Endothelial cell of umbilical vein (primary cell): ENCODE measurements at regions of chr5 and their contacts with region 1.

Region 1: GRCh38 chr5:34486160-34486848 is 169.8 kb upstream of the RAI14 start:
- DNase-seq: peak; percentile 87
- H3K4me3 ChIP-seq: no peak overlapping the region
- H3K27ac ChIP-seq: peak overlapping the region; percentile 78
- H3K4me1 ChIP-seq: peaks cover 19% of the 10 kb centered on the region
- H3K27me3 ChIP-seq: peaks cover 0 to 7% of the 10 kb centered on the region in 2 experiments
- CTCF ChIP-seq: peak; percentile 68 to 78
- POLR2A ChIP-seq: no peak

Region 2: DNA sequence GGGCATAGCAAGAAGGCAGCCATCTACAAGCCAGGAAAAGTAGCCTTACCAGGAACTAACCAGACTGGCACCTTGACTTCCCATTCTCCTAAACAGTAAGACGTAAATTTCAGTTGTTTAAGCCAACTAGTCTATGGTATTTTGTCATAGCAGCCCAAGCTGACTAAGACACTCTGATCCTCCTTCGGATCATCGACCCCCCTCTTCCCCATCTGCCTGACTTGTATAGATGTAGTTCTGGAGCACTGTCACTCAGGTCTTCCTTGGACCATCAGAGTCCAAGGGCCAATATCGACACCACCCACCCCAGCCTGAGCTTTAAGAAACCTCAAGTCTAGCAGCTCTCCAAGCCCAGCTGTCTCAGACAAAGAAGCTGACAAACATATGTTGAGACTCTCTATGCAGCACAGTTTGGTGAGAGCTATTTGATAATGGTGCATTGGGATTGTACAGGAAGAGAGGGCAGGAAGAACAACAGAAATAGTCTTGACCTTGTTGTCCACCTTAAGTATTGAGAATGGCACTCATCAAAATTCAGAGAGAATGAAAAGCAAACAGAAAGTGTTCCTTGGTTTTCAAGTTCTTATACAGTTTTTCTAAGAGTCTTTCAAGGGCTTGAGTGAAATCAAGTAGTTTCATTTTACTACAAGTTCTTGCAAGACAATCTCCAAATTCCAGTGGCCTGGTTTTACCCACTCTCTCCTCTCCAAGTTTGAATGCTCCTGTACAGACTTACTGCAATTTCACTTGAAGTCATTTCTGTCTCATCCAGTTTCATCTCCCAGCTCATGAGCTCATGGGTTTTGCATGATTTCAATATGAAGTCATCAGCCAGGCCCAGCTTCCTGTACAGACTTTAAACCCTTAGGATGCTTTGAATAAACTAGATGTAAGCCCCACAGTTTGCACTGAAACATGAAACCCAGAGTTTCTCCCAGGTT is 47.5 kb after region 1 on chr5:
- CTCF ChIA-PET with region 1: interaction called, 20 read pairs
- POLR2A ChIA-PET with region 1: no interaction called
- dilution Hi-C with region 1: no loop called
- intact Hi-C with region 1: loop called (anchors 1 kb)
- DNase-seq: peak; percentile 39
- H3K4me3 ChIP-seq: no peak overlapping the region
- H3K27ac ChIP-seq: no peak overlapping the region
- H3K4me1 ChIP-seq: peaks cover 11% of the 10 kb centered on the region
- H3K27me3 ChIP-seq: no peaks in the 10 kb centered on the region
- CTCF ChIP-seq: no peak
- POLR2A ChIP-seq: no peak

Region 3: GRCh38 chr5:34551911-34552433 is 65.7 kb after region 1 on chr5:
- CTCF ChIA-PET with region 1: no interaction called
- POLR2A ChIA-PET with region 1: no interaction called
- dilution Hi-C with region 1: no loop called
- intact Hi-C with region 1: no loop called
- DNase-seq: no peak
- H3K4me3 ChIP-seq: no peak overlapping the region
- H3K27ac ChIP-seq: no peak overlapping the region
- H3K4me1 ChIP-seq: no peaks in the 10 kb centered on the region
- H3K27me3 ChIP-seq: no peaks in the 10 kb centered on the region
- CTCF ChIP-seq: no peak
- POLR2A ChIP-seq: no peak

Region 4: DNA sequence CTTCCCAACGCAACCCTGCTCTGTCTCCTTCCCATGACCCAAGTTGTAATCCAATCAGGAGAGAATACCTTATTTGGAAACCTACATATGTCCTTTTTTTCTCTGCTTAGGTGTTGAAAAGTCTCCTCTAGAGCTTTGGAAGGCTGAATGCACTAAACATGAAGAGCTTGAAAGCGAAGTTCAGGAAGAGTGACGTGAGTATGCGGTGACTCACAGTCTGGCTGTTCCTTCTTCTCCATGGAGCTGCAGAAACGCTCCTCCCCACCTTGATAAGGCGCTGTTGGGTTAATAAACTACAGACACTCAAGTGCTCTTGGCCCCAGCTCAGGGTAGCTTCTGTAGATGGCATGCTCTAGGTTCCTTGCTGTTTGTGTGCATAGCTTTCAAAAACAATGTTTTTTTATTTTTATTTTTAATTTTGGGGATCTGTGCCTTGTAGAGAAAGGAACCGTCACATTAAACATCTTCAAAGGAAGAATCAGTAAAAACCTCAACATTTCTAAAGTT is 200.5 kb after region 1 on chr5:
- CTCF ChIA-PET with region 1: interaction called, 25 read pairs
- POLR2A ChIA-PET with region 1: no interaction called
- dilution Hi-C with region 1: no loop called
- intact Hi-C with region 1: loop called (anchors 1 kb)
- DNase-seq: peak; percentile 97
- H3K4me3 ChIP-seq: peak overlapping the region in 1 of 3 experiments; percentile 12
- H3K27ac ChIP-seq: peak overlapping the region; percentile 80
- H3K4me1 ChIP-seq: peaks cover 63% of the 10 kb centered on the region
- H3K27me3 ChIP-seq: no peaks in the 10 kb centered on the region
- CTCF ChIP-seq: peak in 1 of 2 donors; percentile 6
- POLR2A ChIP-seq: no peak

Region 5: DNA sequence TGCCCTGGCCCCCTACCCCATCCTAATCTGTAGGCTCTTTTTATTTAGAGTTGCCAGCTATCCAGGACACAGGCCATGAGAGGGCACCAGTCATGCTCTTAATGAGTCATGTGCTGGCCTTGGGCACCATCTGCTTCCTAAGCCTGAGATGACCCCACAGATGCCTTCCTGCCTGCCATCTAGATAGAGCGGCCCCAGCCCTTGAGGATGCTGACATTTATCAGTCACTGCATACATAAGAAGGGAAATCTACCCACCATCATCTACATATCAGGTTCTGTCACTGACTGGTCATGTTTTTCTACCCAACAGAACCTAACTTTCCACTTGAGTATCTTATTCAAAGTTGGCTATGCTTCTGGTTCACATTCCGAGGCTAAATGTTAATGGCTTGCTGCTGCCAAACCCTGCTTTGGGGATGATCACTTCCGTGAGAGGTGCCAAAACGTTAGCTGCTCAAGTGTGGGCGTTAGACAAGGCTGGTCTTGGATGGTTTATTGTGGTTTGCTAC is 302.8 kb after region 1 on chr5:
- CTCF ChIA-PET with region 1: interaction called, 4 read pairs
- POLR2A ChIA-PET with region 1: no interaction called
- dilution Hi-C with region 1: no loop called
- intact Hi-C with region 1: loop called (anchors 5 kb)
- DNase-seq: peak; percentile 95
- H3K4me3 ChIP-seq: no peak overlapping the region
- H3K27ac ChIP-seq: peak overlapping the region; percentile 81
- H3K4me1 ChIP-seq: peaks cover 46% of the 10 kb centered on the region
- H3K27me3 ChIP-seq: no peaks in the 10 kb centered on the region
- CTCF ChIP-seq: no peak
- POLR2A ChIP-seq: peak; percentile 84

Region 6: DNA sequence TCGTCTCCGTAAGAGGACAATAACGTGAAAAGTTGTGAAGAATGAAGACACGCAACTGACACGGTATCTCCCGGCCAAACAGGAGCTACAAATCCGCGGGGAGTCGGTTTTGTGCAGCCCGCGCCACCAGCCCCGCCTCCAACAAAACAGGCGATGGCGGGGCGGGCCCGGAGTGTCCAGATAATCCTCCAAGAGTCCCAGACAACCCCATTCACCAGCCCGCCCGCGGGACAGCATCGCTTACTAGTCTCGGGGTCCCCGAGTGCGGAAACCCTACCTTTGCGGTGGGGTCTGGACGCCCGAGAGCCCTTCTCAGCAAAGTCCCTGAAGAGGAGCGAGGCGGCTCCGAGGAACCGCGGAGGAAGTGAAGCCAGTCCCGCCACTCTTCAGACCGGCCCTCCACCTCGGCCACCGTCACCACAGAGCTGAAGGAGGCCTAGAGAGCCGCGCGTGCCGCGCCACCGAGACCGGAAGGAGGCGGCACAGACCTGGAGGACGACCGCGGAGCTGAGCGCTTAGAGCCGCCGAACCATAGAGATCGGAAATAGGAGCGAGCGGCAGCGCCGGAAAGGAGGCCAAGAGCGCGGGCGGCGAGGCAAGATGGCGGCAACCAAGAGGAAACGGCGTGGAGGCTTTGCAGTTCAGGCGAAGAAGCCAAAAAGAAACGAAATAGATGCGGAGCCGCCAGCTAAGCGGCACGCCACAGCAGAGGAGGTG is 429.0 kb after region 1 on chr5 and contains the starts of genes BRIX1 and RAD1:
- CTCF ChIA-PET with region 1: interaction called, 3 read pairs
- POLR2A ChIA-PET with region 1: no interaction called
- dilution Hi-C with region 1: loop called (anchors 25 kb)
- intact Hi-C with region 1: no loop called
- DNase-seq: peak; percentile 98
- H3K4me3 ChIP-seq: peak within 1 kb of the TSS; percentile 77 to 97 (median 87)
- H3K27ac ChIP-seq: peak within 1 kb of the TSS; percentile 64
- H3K4me1 ChIP-seq: peaks cover 28% of the 10 kb centered on the region
- H3K27me3 ChIP-seq: no peaks in the 10 kb centered on the region
- CTCF ChIP-seq: no peak
- POLR2A ChIP-seq: peak; percentile 78
- total RNA-seq, gene BRIX1: 28.4 and 32.2 TPM in 2 replicates
- total RNA-seq, gene RAD1: 22.2 and 25.0 TPM in 2 replicates

Region 7: DNA sequence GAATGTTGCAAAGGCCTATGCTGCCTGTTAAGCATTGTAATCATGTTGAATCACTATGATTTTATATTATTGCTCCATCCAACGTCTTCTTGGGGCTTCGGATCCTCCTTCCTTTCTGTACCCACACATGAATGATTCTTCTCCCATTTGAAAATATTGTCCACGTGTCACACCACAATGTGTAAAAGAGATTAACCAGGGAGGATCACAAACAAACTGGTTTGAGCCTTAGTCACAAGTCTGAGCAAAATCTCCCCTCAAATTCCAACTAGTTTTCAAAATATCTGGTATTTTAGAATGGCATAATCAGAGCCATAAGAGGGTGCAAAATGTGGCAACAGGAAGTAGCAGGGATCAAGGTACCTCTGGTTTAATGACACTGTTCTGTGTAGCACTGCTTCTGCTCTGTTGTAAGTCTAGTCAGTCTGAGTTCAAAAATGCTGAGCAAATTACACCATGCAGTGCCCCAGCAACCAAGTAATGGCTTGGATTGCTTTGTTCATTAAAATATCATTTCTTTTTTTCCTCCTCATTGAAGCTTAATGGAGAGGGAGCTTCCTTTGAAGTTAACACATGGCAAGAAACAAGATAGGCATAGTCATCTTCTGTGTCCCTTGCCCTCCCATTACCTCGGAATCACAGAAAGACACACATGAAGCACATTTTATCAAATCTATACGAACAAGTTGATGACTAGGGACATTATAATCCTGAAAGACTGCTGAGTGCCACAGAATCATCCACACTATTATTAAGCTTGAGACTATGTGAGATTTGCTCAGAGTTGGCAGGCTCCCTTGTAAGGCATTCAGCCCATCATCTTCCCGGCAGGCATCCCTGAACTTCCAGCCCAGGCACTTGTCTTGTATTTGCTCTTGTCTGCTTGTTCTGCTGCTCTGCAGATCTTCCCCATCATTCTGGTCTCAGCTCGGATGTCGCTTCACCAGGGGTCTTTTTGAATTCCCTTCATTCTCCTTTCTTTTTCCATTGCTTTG is 845.9 kb after region 1 on chr5:
- CTCF ChIA-PET with region 1: no interaction called
- POLR2A ChIA-PET with region 1: no interaction called
- dilution Hi-C with region 1: no loop called
- intact Hi-C with region 1: no loop called
- DNase-seq: no peak
- H3K4me3 ChIP-seq: no peak overlapping the region
- H3K27ac ChIP-seq: no peak overlapping the region
- H3K4me1 ChIP-seq: no peaks in the 10 kb centered on the region
- H3K27me3 ChIP-seq: no peaks in the 10 kb centered on the region
- CTCF ChIP-seq: no peak
- POLR2A ChIP-seq: no peak